ENCODE measurements at regions of chr2 and their contacts with region 1.

Region 1: DNA sequence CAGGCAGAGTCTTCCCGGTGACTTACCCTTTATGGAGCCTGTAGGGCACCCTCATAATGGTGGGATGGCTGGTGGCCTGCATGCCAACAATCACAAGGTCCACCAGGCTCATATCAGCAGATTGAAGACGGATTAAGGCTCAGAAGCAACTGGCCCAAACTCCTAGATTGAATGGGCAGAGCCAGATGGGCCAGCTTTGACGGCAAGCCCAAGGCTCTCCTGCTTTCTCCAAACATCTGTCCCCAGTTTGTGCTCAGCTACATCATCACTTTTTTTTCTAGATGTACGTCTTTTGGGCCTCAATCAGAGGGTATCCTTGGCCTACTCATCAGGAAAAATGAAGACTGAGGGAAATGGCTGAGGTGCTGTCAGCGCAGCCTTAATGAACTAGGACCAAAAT is 114.6 kb downstream of the VIT start:
- DNase-seq: no peak
- ATAC-seq: no peak
- H3K4me3 ChIP-seq: no peak overlapping the region
- H3K27ac ChIP-seq: no peak overlapping the region
- H3K4me1 ChIP-seq: no peaks in the 10 kb centered on the region
- CTCF ChIP-seq: no peak
- EP300 ChIP-seq: no peak
- POLR2A ChIP-seq: no peak
- RAD21 ChIP-seq: no peak

Region 2: GRCh38 chr2:36717603-36718266 is 93.3 kb before region 1 on chr2:
- CTCF ChIA-PET with region 1: no interaction called
- POLR2A ChIA-PET with region 1: no interaction called
- DNase-seq: no peak
- ATAC-seq: no peak; a peak in 1 of 6 replicates
- H3K4me3 ChIP-seq: no peak overlapping the region
- H3K27ac ChIP-seq: no peak overlapping the region
- H3K4me1 ChIP-seq: no peaks in the 10 kb centered on the region
- CTCF ChIP-seq: no peak
- EP300 ChIP-seq: no peak
- POLR2A ChIP-seq: no peak
- RAD21 ChIP-seq: no peak

Region 3: DNA sequence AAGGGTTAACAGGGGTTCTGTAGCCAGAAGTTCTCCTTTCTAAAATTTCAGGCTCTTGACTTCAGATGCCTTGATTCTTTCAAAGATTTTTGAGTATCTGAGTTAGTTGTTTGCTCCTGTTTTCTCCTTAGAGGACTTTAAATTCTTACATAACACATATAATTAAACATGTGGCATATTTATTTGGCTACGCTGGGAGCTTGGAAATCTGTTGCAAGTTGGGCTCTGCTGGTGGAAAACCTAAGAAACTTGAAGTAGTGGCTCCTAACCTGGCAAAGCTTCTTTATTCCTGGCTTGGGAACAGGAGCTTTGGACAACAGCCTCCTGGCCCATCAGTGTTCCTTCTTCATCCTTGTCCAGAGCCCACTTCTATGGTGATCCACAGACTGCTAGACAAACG is 42.0 kb before region 1 on chr2:
- CTCF ChIA-PET with region 1: no interaction called
- POLR2A ChIA-PET with region 1: no interaction called
- DNase-seq: no peak
- ATAC-seq: no peak
- H3K4me3 ChIP-seq: no peak overlapping the region
- H3K27ac ChIP-seq: no peak overlapping the region
- H3K4me1 ChIP-seq: no peaks in the 10 kb centered on the region
- CTCF ChIP-seq: no peak
- EP300 ChIP-seq: no peak
- POLR2A ChIP-seq: no peak
- RAD21 ChIP-seq: no peak

Region 4: GRCh38 chr2:36820942-36821605 is 10.0 kb after region 1 on chr2:
- CTCF ChIA-PET with region 1: interaction called, 11 read pairs
- POLR2A ChIA-PET with region 1: no interaction called
- DNase-seq: no peak
- ATAC-seq: no peak
- H3K4me3 ChIP-seq: no peak overlapping the region
- H3K27ac ChIP-seq: no peak overlapping the region
- H3K4me1 ChIP-seq: peaks cover 6% of the 10 kb centered on the region; the same call in 1 of the 3 replicates
- CTCF ChIP-seq: no peak
- EP300 ChIP-seq: no peak
- POLR2A ChIP-seq: no peak
- RAD21 ChIP-seq: no peak

Region 5: DNA sequence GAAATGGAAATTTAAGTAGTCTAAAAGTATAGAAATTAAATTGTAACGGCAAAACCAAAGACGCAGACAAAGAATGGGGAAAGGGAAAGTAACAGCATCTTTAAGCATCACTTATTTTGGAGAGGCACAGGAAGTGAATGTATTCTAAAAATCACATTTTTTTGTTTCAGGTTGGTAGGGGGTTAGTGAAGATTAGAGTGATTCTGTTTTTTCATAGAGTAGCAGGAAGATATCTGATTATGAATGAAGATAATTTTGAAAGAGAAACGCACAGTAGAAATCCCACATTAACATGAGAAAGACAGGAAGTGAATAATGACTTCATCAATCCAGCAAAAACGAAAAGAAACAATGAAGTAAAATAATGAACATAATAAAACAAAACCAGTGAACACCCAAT is 24.1 kb after region 1 on chr2:
- CTCF ChIA-PET with region 1: no interaction called
- POLR2A ChIA-PET with region 1: no interaction called
- DNase-seq: no peak
- ATAC-seq: no peak
- H3K4me3 ChIP-seq: no peak overlapping the region
- H3K27ac ChIP-seq: no peak overlapping the region
- H3K4me1 ChIP-seq: no peaks in the 10 kb centered on the region
- CTCF ChIP-seq: no peak
- EP300 ChIP-seq: no peak
- POLR2A ChIP-seq: no peak
- RAD21 ChIP-seq: no peak

Measured in A549 (cell line).